ENCODE measurements at regions of chr21 and their contacts with region 1.

Region 1: DNA sequence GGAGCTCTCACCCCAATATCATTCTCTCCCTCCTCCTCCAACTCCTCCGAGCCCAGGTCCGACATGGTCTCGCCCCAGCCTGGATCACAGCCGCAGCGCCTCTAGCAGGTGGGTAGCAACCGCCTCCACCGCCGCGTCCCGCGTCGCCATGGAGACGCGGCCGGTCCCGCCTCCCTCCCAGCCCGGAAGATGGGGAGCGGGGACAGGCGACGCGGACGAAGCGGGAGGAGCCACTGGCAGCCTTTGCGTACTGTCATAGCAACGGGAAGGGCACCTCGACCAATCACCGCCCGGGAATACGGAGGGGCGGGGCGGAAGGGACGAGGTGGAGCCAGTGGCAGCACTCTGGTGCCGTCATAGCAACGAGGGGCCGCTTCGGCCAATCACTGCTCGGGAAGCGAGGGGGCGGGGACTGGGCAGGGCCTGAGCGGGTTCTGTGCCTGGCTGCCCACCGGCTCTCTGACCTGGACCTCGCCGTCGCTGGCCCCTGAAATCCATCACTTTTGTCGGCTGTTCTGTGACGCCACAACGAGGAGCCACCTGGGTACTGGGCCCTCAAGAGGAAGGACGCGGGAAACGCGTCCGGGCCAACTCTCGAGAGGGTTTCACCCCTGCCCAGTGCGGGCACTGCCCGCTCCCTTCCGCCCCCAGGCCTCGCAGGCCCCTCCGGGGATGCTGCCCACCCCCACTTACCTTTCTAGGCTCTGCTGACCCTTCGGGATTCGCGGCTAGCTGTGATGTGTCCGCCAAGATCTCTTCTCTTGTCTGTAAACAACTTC is at the start of gene RSPH1:
- DNase-seq: peak; percentile 100
- H3K4me3 ChIP-seq: peak within 1 kb of the TSS; percentile 59 to 98 (median 86)
- H3K27ac ChIP-seq: peak within 1 kb of the TSS in 57 of 59 donors; percentile 57 to 95 (median 87)
- H3K27me3 ChIP-seq: no peaks in the 10 kb centered on the region
- CTCF ChIP-seq: peak in 10 of 56 donors; percentile 9 to 35 (median 18)
- total RNA-seq, gene RSPH1: 3.5 to 12.9 (median 7.5) TPM

Region 2: DNA sequence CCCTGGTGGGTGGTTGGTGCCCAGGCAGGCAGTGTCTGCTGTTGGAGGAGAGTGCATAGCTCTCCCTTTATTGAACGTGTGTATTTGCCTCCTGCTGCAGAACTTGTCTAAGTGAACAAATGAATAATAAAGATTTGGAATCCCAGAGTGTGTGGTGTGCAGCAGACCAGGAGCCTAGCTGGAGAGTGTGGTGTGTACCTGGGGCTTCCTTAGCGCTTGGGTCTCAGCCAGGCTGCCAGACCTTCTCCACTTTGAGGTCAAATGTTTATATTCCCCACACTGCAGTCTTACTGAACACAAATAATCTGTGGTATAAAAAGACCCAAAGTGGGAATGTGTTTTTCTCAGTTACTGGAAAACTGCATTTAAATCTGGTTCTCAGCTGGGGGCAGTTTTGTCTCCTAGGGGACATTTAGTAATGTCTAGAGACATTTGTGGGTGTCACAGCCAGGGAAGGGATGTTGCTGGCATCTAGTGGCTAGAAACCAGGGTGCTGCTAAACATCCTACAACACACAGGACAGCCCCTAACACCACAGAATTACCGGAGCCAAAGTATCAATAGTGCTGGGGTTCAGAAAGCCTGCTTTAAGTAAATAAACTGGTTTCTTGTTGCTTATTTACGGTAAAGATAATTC is 40.9 kb after region 1 on chr21:
- intact Hi-C with region 1: loop called in 1 of 2 experiments (anchors 5 kb)
- DNase-seq: peak in 3 of 10 donors; percentile 33 to 38 (median 33)
- H3K4me3 ChIP-seq: no peak overlapping the region
- H3K27ac ChIP-seq: peak overlapping the region in 1 of 59 donors; percentile 8
- H3K27me3 ChIP-seq: no peaks in the 10 kb centered on the region
- CTCF ChIP-seq: peak in 53 of 56 donors; percentile 13 to 66 (median 41)

Region 3: DNA sequence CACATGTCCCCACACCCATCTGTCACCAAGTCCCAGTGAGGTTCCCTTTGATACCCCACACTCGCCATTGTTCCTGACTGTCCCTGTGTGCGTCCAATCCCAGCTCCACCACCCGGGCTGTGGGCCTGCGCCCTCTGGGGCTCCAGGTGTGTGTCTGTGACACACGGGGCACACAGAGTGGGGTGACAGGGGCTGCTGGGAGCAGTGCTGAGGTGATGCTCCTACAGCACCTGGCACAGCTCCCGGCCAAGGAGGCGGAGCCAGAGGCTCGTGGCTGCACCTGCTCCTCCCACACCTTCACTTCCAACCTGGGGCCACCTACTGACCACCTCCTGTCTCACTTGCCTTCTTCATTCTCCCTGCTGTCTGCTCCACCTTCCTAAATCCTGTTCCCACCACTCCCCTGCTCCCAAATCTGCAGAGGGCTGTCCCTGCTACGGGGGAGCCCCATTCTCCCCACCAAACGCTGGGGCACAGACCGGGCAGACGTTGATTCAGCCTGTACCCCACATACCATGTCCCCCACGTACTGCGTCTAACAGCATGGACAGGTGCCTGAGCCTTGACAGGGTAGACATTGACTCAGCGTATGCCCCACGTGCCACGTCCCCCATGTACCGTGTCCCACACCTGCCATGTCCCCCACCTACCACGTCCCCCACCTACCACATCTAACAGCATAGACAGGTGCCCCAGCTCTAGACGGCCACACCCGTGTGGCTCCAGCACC is 366.6 kb after region 1 on chr21:
- intact Hi-C with region 1: no loop called
- DNase-seq: peak in 1 of 10 donors; percentile 48
- H3K4me3 ChIP-seq: no peak overlapping the region
- H3K27ac ChIP-seq: peak overlapping the region in 1 of 59 donors; percentile 81
- H3K27me3 ChIP-seq: no peaks in the 10 kb centered on the region
- CTCF ChIP-seq: no peak